Lower leg skin (tissue), 4 donors: ENCODE measurements at regions of chr5 and their contacts with region 1.

Region 1: DNA sequence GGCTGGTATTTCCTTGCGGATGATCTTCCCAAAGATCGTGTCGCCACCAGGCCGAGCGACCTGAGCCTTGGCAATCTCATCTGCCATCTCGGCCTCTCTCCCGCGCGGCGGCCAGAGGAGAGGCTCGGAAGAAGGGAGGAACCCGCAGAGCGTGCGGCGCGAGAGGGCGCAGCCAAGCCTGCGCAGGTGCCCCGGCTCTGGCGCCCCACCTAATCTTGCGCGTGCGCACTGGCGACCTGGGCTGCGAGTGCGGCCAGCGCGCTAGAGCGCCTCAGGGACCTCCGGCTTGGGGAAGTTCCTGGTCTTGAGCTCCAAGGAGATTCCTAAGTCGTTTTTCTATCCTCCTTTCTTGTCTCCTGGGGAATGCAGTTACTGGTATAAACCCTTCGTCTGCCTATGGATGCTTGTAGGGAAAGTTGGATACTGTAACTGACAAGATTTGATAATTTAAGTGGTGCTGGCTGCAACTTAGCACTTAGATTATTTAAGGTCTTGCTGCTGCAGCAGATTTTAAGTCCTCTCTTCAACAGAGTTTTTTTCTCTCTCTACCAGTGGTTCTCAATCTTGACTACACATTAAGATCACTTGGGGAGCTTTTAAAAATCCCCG is at the start of gene HINT1:
- DNase-seq: peak; percentile 86 to 98
- H3K4me3 ChIP-seq: peak within 1 kb of the TSS; percentile 82
- CTCF ChIP-seq: no peak
- POLR2A ChIP-seq: peak in 1 of 2 donors; percentile 57
- total RNA-seq, gene HINT1: 154 to 211 (median 190) TPM

Region 2: GRCh38 chr5:131417240-131417869 is 252.1 kb after region 1 on chr5:
- intact Hi-C with region 1: loop called (anchors 10 kb)
- DNase-seq: peak; percentile 63 to 94
- H3K4me3 ChIP-seq: no peak overlapping the region
- CTCF ChIP-seq: peak in 1 of 3 donors; percentile 26
- POLR2A ChIP-seq: no peak